Transverse colon (tissue), 4 donors: ENCODE measurements at regions of chr7 and their contacts with region 1.

Region 1: DNA sequence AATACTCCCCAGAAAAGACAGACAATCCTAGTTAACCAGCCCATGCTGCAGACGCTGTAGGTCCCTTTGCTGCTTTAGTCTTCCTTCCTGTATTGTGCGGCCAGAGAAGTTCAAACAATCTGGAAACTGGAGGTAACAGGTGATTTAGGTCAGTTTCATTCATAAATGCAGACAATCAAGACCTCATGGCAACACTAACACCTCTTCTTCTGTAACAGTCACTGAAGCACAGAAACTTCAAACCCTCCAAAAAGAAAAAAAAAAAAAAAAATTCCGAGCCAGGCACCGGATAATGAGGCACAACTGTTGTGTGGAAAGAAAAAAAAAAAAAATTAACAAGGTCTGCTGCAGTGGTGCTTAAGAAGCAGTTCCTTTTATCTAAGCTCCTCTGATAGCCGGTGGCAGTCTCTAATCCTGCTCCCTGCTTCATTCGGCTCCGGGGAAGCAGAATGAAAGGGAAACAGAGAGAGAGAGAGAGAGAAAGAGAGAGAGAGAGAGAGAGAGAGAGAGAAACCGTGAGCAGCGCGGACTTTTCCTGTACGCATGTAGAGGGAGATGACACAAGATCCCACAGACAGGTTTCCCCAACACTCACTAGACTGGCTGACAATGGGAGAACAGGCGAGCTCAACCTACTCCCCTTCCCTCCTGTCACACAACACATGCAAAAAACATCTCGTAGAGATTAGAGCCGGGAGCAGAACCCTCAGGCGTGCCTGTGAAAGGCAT is at the start of gene SEMA3A:
- DNase-seq: peak; percentile 18
- H3K4me3 ChIP-seq: peak within 1 kb of the TSS; percentile 25 to 54 (median 36)
- H3K27ac ChIP-seq: peak within 1 kb of the TSS; percentile 62 to 84 (median 66)
- H3K4me1 ChIP-seq: no peaks in the 10 kb centered on the region
- H3K27me3 ChIP-seq: no peaks in the 10 kb centered on the region
- CTCF ChIP-seq: peak in 2 of 5 experiments; percentile 10 to 14
- EP300 ChIP-seq: no peak
- POLR2A ChIP-seq: peak; percentile 19
- total RNA-seq, gene SEMA3A: 1.00 to 8.3 (median 4.7) TPM

Region 2: DNA sequence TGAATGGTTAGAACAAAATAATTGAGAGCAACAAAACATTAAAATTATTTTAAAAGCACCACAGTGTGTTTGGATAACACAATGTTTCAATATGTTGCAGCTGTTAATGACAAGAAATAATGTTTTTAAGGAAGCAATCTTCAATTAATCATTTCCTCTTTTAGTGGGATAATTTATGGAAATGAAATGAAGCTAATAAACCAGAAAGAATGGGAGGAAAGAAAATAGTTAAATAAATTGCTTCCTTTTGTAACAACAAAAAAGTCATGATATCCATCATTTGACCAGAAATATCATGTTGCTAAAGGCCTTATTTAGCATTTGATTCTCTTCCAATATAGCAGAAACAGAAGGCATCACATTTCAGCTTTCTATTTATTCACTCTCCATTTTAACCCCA is 224.6 kb before region 1 on chr7:
- in situ Hi-C with region 1: no loop called
- intact Hi-C with region 1: no loop called
- DNase-seq: no peak
- H3K4me3 ChIP-seq: no peak overlapping the region
- H3K27ac ChIP-seq: no peak overlapping the region
- H3K4me1 ChIP-seq: no peaks in the 10 kb centered on the region
- H3K27me3 ChIP-seq: no peaks in the 10 kb centered on the region
- CTCF ChIP-seq: no peak
- EP300 ChIP-seq: no peak
- POLR2A ChIP-seq: no peak

Region 3: DNA sequence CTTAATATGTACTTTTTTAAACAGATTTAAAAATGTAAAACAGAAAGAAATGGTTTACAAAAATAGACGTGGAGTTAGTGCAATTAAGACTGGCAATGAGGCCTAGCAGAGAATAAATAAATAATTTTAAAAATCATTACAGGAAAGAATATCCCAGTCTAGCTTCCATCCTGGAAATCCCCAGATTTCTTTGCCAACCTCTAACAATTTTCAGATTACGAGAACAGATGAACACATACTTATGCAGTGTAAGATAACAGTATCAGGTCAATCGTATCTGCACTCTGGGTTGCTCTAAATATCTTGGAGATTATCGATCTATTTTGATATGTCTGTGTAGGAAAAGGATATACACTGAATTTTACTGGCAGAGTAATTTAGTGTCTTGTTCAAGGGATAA is 210.6 kb before region 1 on chr7:
- in situ Hi-C with region 1: loop called in 1 of 4 experiments (anchors 10 kb)
- intact Hi-C with region 1: no loop called
- DNase-seq: no peak
- H3K4me3 ChIP-seq: no peak overlapping the region
- H3K27ac ChIP-seq: no peak overlapping the region
- H3K4me1 ChIP-seq: peaks cover 0 to 3% (median 0%) of the 10 kb centered on the region in 4 donors
- H3K27me3 ChIP-seq: no peaks in the 10 kb centered on the region
- CTCF ChIP-seq: no peak
- EP300 ChIP-seq: no peak
- POLR2A ChIP-seq: no peak

Region 4: GRCh38 chr7:84291756-84292155 is 97.0 kb after region 1 on chr7:
- in situ Hi-C with region 1: no loop called
- intact Hi-C with region 1: no loop called
- DNase-seq: no peak
- H3K4me3 ChIP-seq: no peak overlapping the region
- H3K27ac ChIP-seq: no peak overlapping the region
- H3K4me1 ChIP-seq: no peaks in the 10 kb centered on the region
- H3K27me3 ChIP-seq: no peaks in the 10 kb centered on the region
- CTCF ChIP-seq: no peak
- EP300 ChIP-seq: no peak
- POLR2A ChIP-seq: no peak

Region 5: GRCh38 chr7:84317536-84317935 is 122.8 kb after region 1 on chr7:
- in situ Hi-C with region 1: no loop called
- intact Hi-C with region 1: loop called (anchors 10 kb)
- DNase-seq: no peak
- H3K4me3 ChIP-seq: no peak overlapping the region
- H3K27ac ChIP-seq: peak overlapping the region in 1 of 4 donors; percentile 56
- H3K4me1 ChIP-seq: peaks cover 0 to 3% (median 0%) of the 10 kb centered on the region in 4 donors
- H3K27me3 ChIP-seq: no peaks in the 10 kb centered on the region
- CTCF ChIP-seq: no peak
- EP300 ChIP-seq: no peak
- POLR2A ChIP-seq: no peak